ENCODE measurements at regions of chr6 and their contacts with region 1.

Region 1: GRCh38 chr6:40825102-40825501 is 213.9 kb downstream of the UNC5CL start:
- DNase-seq: no peak
- H3K4me3 ChIP-seq: no peak overlapping the region
- H3K27ac ChIP-seq: no peak overlapping the region
- H3K4me1 ChIP-seq: no peaks in the 10 kb centered on the region
- H3K27me3 ChIP-seq: no peaks in the 10 kb centered on the region
- CTCF ChIP-seq: no peak

Region 2: GRCh38 chr6:39347906-39348585 is 1477.1 kb before region 1 on chr6:
- intact Hi-C with region 1: loop called (anchors 5 kb)
- DNase-seq: peak; percentile 74
- H3K4me3 ChIP-seq: no peak overlapping the region
- H3K27ac ChIP-seq: no peak overlapping the region
- H3K4me1 ChIP-seq: no peaks in the 10 kb centered on the region
- H3K27me3 ChIP-seq: no peaks in the 10 kb centered on the region
- CTCF ChIP-seq: peak; percentile 80